Left colon (tissue), 2 donors: ENCODE measurements at regions of chrX and their contacts with region 1.

Region 1: DNA sequence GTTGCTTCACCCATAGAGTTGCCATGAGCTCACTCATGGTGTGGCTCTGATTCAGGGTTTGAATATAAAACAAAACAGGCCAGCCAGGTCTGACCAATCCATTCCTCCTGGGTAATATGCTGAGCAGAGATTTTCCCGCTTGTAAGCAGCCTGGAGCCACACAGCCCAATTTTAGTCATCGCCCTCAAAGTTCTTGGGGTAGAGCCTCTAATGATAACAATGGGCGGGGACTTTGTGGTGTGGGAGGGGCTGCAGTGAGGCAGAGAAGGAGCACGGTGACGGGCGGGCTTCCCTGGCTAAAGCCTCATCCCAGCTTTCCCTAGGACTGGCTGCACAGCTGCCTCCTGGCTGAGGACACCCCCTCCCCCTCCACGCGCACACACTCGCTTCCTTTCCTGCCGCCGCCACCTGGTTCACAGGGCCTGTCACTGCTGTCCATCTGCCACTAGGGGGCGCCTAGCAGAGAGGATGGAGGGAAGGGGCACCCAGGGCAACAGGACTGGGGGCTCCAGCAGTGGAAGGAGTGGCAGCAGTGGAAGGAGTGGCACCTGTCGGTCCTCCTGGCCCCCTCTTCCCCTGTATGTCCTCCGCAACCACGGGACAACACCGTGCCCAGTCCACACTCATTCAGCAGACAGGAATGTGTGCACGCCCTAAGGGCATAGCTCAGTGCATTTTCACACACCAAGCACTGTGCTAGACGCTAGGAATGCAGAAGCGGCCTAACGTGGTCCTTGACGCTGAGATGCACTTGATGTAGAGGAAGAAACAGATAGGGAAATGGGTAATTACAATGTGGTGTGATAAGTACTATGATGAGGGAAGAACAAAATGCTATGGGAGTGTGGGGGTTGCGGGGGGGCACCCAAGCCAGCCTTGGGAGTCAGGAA is 26.8 kb downstream of the PRPS1 start:
- DNase-seq: peak; percentile 53 to 59
- ATAC-seq: peak; percentile 76

Region 2: DNA sequence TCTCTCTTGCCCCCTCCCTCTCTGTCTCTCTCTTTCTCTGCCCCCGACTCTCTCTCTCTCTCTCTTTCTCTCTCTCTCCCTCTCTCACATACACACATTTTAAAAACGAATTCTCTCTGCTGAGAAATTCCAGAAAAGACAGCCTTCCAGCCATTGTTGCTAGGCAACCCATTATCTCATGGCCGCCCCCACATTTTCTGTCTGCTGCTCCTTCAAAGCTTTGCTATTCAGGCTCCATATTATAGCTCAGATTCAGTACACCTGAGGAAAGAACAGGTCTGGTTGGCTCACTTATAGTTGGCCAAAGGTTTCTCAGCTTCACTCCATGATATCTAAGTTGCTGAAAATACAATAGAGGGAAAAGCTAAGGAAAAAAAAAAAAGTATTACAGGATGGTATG is 1217.7 kb before region 1 on chrX:
- intact Hi-C with region 1: no loop called
- DNase-seq: no peak
- ATAC-seq: no peak

Region 3: DNA sequence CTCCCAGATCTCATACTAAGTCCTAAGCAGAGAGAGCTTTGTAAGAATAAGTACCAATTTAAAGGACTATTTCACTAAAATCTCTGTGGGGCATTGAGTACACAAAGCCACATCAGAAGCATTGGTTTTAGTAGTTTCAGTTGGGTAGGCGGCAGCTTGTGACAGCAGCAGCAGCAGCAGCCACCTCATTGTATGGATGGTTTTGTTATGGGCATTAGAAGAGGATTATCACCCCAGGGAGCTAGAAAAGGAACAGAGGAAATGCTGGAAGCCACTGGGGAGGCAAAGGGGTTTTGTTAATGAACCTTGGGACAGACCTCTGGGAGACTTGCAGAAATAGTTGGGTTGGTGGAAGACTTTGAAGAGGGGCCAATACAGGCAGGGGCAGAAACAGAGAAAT is 299.6 kb before region 1 on chrX:
- intact Hi-C with region 1: no loop called
- DNase-seq: no peak
- ATAC-seq: no peak

Region 4: DNA sequence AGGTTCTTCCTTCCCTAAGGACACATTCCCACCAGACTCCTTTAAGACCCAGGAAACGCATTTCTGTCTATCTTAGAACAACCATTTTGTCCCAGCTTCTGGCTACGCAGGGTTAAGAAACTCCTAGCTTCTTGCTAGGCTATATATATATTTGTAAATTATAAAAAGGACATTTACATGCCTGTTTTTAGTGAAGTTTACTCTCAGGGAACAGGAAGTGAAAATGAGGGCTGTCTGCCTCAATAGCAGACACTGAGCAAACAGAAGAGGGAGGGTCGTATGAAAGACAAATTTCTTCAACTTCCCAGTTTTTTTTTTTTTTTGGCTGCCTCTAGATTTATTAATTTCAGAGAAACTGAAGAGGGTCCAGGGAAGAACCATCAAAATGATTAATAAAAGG is 214.9 kb before region 1 on chrX:
- intact Hi-C with region 1: no loop called
- DNase-seq: no peak
- ATAC-seq: no peak

Region 5: GRCh38 chrX:107776649-107777535 is 121.8 kb after region 1 on chrX:
- intact Hi-C with region 1: loop called in 1 of 2 experiments (anchors 5 kb)
- DNase-seq: peak; percentile 78 to 80
- ATAC-seq: peak; percentile 74

Region 6: DNA sequence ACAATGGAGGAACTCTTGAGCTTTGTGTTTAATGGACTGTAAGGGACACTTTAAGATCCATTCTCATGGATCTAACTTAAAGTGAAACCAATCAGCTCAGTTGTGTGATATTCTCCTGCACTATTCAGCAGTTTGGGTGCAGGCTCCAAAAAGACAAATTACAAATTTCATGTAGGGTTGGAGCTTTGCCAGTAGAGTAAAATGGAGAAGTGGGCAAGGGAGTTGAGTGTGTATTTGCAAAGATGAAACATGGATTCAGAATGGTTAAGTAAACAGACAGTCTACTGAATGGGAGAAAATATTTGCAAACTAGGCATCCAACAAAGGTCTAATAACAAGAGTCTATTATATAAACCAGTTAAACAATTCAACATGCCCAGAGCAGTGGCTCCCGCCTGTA is 149.3 kb after region 1 on chrX:
- intact Hi-C with region 1: no loop called
- DNase-seq: no peak
- ATAC-seq: no peak

Region 7: GRCh38 chrX:107894038-107894437 is 238.9 kb after region 1 on chrX:
- intact Hi-C with region 1: loop called in 1 of 2 experiments (anchors 10 kb)
- DNase-seq: no peak
- ATAC-seq: peak; percentile 64